ENCODE measurements at regions of chr13 and their contacts with region 1.

Region 1: GRCh38 chr13:68369739-68370138 is 1139.6 kb upstream of the PCDH9 start:
- DNase-seq: no peak
- H3K4me3 ChIP-seq: no peak overlapping the region
- H3K27ac ChIP-seq: no peak overlapping the region
- H3K4me1 ChIP-seq: no peaks in the 10 kb centered on the region
- H3K27me3 ChIP-seq: no peaks in the 10 kb centered on the region
- CTCF ChIP-seq: no peak
- POLR2A ChIP-seq: no peak

Region 2: GRCh38 chr13:70275841-70276240 is 1906.1 kb after region 1 on chr13:
- intact Hi-C with region 1: loop called (anchors 5 kb)
- DNase-seq: no peak
- H3K4me3 ChIP-seq: no peak overlapping the region
- H3K27ac ChIP-seq: no peak overlapping the region
- H3K4me1 ChIP-seq: no peaks in the 10 kb centered on the region
- H3K27me3 ChIP-seq: no peaks in the 10 kb centered on the region
- CTCF ChIP-seq: no peak
- POLR2A ChIP-seq: no peak